ENCODE measurements at regions of chr4 and their contacts with region 1.

Region 1: DNA sequence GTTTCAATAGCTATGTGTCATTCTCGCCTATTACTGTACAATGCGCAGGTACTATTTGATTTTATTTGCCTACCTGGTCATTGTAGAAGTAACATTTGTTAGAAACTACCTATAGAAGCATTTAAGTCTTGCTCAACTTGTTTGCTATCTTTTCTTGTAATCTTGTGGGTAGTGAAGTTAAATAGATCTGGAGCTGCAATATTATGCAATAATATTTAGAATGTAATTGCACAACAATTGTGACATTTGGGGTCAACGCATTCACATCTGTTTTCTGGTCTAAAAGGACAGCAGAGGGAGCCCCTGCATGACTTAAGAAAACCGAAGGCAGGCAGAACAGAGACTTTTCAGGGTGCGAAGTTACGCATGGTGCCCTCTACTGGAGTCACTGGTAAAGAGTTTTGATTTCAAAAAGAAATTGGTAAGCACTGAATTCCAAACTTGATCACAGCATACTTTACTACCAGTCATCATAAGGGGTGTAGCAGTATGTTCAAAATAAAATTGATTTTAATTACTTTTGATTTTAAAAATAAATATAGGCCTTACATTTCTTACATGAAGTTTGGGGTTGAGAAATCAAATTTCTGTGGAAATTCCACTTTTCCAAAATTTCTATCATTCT is 503.2 kb upstream of the FAM241A start:
- DNase-seq: peak in 1 of 9 donors; percentile 21
- ATAC-seq: peak; percentile 51
- H3K4me3 ChIP-seq: no peak overlapping the region
- H3K4me3 Mint-ChIP-seq: no peak overlapping the region
- H3K27ac ChIP-seq: no peak overlapping the region
- H3K27ac Mint-ChIP-seq: no peak overlapping the region
- H3K4me1 ChIP-seq: no peaks in the 10 kb centered on the region
- H3K4me1 Mint-ChIP-seq: no peaks in the 10 kb centered on the region
- H3K27me3 ChIP-seq: no peaks in the 10 kb centered on the region
- H3K27me3 Mint-ChIP-seq: no peaks in the 10 kb centered on the region

Region 2: GRCh38 chr4:111854494-111855087 is 212.5 kb after region 1 on chr4:
- CTCF ChIA-PET with region 1: no interaction called
- POLR2A ChIA-PET with region 1: no interaction called
- intact Hi-C with region 1: loop called in 1 of 2 experiments (anchors 2 kb)
- DNase-seq: no peak
- ATAC-seq: no peak
- H3K4me3 ChIP-seq: no peak overlapping the region
- H3K4me3 Mint-ChIP-seq: no peak overlapping the region
- H3K27ac ChIP-seq: no peak overlapping the region
- H3K27ac Mint-ChIP-seq: no peak overlapping the region
- H3K4me1 ChIP-seq: no peaks in the 10 kb centered on the region
- H3K4me1 Mint-ChIP-seq: no peaks in the 10 kb centered on the region
- H3K27me3 ChIP-seq: no peaks in the 10 kb centered on the region
- H3K27me3 Mint-ChIP-seq: no peaks in the 10 kb centered on the region

Region 3: DNA sequence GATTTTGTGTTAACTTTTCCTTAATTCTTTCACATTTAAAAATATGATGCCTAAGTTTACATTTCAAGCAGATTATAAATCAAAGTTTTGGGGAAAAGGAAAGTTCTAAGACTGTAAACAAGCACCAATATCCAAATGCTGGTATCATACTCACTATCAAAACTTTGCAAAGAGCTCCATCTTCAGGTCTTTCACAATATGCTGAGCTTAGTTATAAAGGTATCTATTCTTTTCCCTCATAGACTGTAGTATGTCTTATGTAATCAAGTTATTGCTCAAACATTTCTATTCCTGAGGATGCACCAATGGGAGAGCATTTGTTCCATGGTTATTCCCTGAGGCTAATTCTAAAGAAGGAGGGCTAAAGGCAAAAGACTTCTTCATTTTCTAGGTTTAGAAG is 295.3 kb after region 1 on chr4:
- CTCF ChIA-PET with region 1: no interaction called
- POLR2A ChIA-PET with region 1: no interaction called
- intact Hi-C with region 1: loop called in 1 of 2 experiments (anchors 1 kb)
- DNase-seq: no peak
- ATAC-seq: no peak
- H3K4me3 ChIP-seq: no peak overlapping the region
- H3K4me3 Mint-ChIP-seq: no peak overlapping the region
- H3K27ac ChIP-seq: no peak overlapping the region
- H3K27ac Mint-ChIP-seq: no peak overlapping the region
- H3K4me1 ChIP-seq: no peaks in the 10 kb centered on the region
- H3K4me1 Mint-ChIP-seq: no peaks in the 10 kb centered on the region
- H3K27me3 ChIP-seq: no peaks in the 10 kb centered on the region
- H3K27me3 Mint-ChIP-seq: peaks cover 0 to 13% (median 11%) of the 10 kb centered on the region in 5 donors